CD8-positive, alpha-beta T cell (primary cell): ENCODE measurements at regions of chr1 and their contacts with region 1.

Region 1: DNA sequence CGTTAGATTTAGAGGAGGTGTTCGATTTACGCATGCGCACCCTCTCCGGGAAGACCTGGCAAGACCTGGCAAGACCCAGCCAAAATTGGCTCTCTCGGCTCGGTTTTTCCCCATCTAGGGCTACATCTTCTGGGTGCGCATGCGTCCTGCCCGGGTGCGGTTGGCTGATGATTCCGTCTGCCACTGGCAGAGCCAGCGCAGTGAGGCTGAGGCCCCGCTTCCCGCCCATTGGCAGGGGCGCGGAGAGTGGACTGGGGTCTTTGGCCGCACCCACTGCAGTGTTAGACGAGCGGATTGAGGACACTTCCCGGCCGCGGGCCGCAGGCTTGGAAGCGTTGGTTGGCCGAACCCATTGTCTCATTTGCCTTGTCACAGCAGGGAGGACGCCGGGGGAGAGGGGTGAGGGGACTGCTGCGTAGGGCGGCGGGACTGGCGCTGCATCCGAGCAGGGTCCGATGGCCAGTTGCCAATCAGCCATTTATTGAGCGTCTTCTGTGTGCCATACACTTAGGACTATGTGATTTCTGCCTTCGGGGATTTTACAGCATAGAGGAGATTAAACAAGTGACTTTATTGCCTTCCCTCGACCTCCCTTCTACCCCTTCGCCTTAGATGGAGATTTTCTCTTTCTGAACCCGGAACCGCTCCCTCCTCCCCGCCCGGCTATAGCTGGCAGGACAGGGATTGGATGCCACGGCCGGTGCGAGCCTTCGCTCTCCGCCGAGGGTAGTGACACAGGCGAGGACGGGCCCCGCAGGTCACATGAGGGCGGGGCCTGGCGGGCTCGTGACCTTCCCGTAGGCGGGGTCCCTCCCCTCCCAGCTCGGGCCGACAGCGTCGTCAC is 43.7 kb downstream of the MEF2D start:
- DNase-seq: peak; percentile 92 to 99 (median 96)
- ATAC-seq: peak; percentile 84
- H3K4me3 ChIP-seq: peak overlapping the region; percentile 57 to 62
- H3K4me3 Mint-ChIP-seq: peak overlapping the region; percentile 93
- H3K27ac ChIP-seq: peak overlapping the region; percentile 83 to 89
- H3K27ac Mint-ChIP-seq: peak overlapping the region; percentile 100
- H3K4me1 ChIP-seq: peaks cover 4% of the 10 kb centered on the region
- H3K4me1 Mint-ChIP-seq: peaks cover 17% of the 10 kb centered on the region
- H3K27me3 ChIP-seq: no peaks in the 10 kb centered on the region
- H3K27me3 Mint-ChIP-seq: no peaks in the 10 kb centered on the region
- CTCF ChIP-seq: no peak

Region 2: DNA sequence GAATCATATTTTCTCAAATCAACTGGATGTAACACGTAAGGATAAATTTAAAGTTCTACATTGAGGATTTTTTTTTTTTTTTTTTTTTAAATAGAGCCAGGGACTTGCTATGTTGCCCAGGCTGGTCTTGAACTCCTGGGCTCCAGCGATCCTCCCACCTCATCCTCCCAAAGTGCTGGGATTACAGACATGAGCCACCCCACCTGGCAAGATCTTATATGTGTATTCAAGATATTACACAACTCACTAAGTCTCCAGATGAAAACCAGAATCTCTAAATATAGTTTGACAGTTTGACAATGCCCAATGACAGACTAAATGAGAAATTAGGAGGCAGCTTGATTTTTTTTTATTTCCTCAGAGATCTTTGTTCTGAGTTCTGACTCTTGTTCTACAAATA is 775.1 kb before region 1 on chr1:
- CTCF ChIA-PET with region 1: no interaction called
- POLR2A ChIA-PET with region 1: no interaction called
- intact Hi-C with region 1: no loop called
- DNase-seq: no peak
- ATAC-seq: no peak
- H3K4me3 ChIP-seq: no peak overlapping the region
- H3K4me3 Mint-ChIP-seq: no peak overlapping the region
- H3K27ac ChIP-seq: no peak overlapping the region
- H3K27ac Mint-ChIP-seq: no peak overlapping the region
- H3K4me1 ChIP-seq: peaks cover 32% of the 10 kb centered on the region
- H3K4me1 Mint-ChIP-seq: peaks cover 53% of the 10 kb centered on the region
- H3K27me3 ChIP-seq: no peaks in the 10 kb centered on the region
- H3K27me3 Mint-ChIP-seq: no peaks in the 10 kb centered on the region
- CTCF ChIP-seq: no peak

Region 3: GRCh38 chr1:155847823-155848529 is 608.9 kb before region 1 on chr1:
- CTCF ChIA-PET with region 1: no interaction called
- POLR2A ChIA-PET with region 1: no interaction called
- intact Hi-C with region 1: no loop called
- DNase-seq: peak in 1 of 9 experiments; percentile 29
- ATAC-seq: no peak
- H3K4me3 ChIP-seq: no peak overlapping the region
- H3K4me3 Mint-ChIP-seq: peak overlapping the region; percentile 44
- H3K27ac ChIP-seq: peak overlapping the region in 1 of 2 experiments; percentile 12
- H3K27ac Mint-ChIP-seq: peak overlapping the region; percentile 25
- H3K4me1 ChIP-seq: peaks cover 26% of the 10 kb centered on the region
- H3K4me1 Mint-ChIP-seq: peaks cover 61% of the 10 kb centered on the region
- H3K27me3 ChIP-seq: no peaks in the 10 kb centered on the region
- H3K27me3 Mint-ChIP-seq: no peaks in the 10 kb centered on the region
- CTCF ChIP-seq: no peak

Region 4: GRCh38 chr1:156601122-156601830 is 144.4 kb after region 1 on chr1 and contains the start of gene GPATCH4:
- CTCF ChIA-PET with region 1: interaction called, 3 read pairs
- POLR2A ChIA-PET with region 1: interaction called, 5 read pairs
- intact Hi-C with region 1: loop called (anchors 2 kb)
- DNase-seq: peak in 8 of 9 experiments; percentile 61 to 86 (median 72)
- ATAC-seq: peak; percentile 80
- H3K4me3 ChIP-seq: peak within 1 kb of the TSS; percentile 65 to 70
- H3K4me3 Mint-ChIP-seq: peak within 1 kb of the TSS; percentile 98
- H3K27ac ChIP-seq: peak within 1 kb of the TSS; percentile 57 to 80
- H3K27ac Mint-ChIP-seq: peak within 1 kb of the TSS; percentile 98
- H3K4me1 ChIP-seq: peaks cover 24% of the 10 kb centered on the region
- H3K4me1 Mint-ChIP-seq: peaks cover 34% of the 10 kb centered on the region
- H3K27me3 ChIP-seq: no peaks in the 10 kb centered on the region
- H3K27me3 Mint-ChIP-seq: no peaks in the 10 kb centered on the region
- CTCF ChIP-seq: no peak
- total RNA-seq, gene GPATCH4: 46.4 to 46.7 TPM

Region 5: DNA sequence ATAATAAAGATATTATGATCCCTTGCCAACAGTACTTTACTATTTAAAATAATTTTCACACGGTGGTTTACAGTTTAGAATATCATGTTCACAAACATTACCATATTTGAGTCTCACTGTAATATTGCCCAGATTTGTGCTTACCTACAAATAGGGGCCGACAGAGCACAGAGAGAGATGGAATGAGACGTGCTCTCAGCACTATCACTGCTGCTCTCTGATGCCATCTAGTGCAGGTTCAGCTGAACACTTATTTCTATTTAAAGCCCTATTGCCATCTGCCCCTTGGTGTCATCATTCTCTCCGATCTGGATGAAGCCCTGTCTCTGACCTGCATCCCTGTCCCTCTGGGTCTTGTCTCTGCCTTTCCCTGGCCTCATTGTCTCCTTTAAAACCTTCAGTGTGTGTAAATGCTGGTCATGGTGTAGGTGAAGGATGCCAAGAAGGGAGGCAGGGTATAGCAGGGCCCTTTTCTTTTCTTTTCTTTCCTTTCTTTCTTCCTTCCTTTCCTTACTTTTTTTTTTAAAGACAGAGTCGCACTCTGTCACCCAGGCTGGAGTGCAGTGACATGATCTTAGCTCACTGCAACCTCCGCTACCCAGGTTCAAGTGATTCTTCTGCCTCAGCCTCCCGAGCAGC is 151.3 kb after region 1 on chr1:
- CTCF ChIA-PET with region 1: interaction called, 17 read pairs
- POLR2A ChIA-PET with region 1: interaction called, 5 read pairs
- intact Hi-C with region 1: loop called (anchors 1 kb)
- DNase-seq: peak; percentile 37 to 89 (median 65)
- ATAC-seq: peak; percentile 95
- H3K4me3 ChIP-seq: no peak overlapping the region
- H3K4me3 Mint-ChIP-seq: no peak overlapping the region
- H3K27ac ChIP-seq: no peak overlapping the region
- H3K27ac Mint-ChIP-seq: no peak overlapping the region
- H3K4me1 ChIP-seq: peaks cover 8% of the 10 kb centered on the region
- H3K4me1 Mint-ChIP-seq: peaks cover 11% of the 10 kb centered on the region
- H3K27me3 ChIP-seq: peaks cover 0 to 2% of the 10 kb centered on the region in 2 experiments
- H3K27me3 Mint-ChIP-seq: peaks cover 9% of the 10 kb centered on the region
- CTCF ChIP-seq: peak; percentile 88

Region 6: DNA sequence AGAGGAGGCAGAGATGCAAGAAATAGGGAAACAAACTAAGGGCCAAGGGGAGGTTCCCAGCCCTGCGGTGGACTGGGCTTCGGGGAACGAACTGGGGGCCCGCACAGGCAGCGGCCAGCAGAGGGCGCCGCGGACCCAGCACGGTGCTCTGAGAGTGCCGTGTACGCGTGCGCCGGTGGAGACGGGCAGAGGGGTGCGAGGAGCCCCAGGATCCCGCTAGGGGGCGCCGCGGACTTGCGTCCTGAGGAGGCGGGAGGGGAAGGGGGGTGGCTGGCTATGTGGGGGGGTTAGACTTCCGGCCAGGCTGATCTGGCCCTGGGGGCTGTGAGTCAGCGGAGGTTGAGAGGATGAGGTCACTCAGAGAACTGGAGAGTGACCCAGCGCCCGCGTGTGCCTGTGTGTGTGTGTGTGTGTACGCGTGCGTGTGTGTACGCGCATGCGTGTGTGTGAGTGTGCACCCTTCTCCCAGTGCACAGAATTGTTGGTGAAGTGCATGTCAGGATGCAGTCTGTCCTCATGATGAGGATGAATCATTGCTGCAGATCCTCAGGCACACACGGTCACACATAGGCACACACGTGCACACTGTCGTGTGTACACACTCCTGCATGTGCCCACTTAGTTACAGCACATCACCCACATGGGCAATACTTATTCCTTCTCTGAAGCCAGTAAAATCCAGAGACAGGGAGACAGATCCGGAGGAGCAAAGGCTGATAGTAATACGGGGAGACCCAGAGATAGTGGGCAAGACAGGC is 203.3 kb after region 1 on chr1:
- CTCF ChIA-PET with region 1: no interaction called
- POLR2A ChIA-PET with region 1: no interaction called
- intact Hi-C with region 1: loop called in 1 of 2 experiments (anchors 5 kb)
- DNase-seq: peak; percentile 74 to 94 (median 92)
- ATAC-seq: peak; percentile 91
- H3K4me3 ChIP-seq: no peak overlapping the region
- H3K4me3 Mint-ChIP-seq: peak overlapping the region; percentile 45
- H3K27ac ChIP-seq: peak overlapping the region in 1 of 2 experiments; percentile 47
- H3K27ac Mint-ChIP-seq: no peak overlapping the region
- H3K4me1 ChIP-seq: peaks cover 44% of the 10 kb centered on the region
- H3K4me1 Mint-ChIP-seq: peaks cover 44% of the 10 kb centered on the region
- H3K27me3 ChIP-seq: peaks cover 12 to 14% of the 10 kb centered on the region in 2 experiments
- H3K27me3 Mint-ChIP-seq: peaks cover 20% of the 10 kb centered on the region
- CTCF ChIP-seq: peak; percentile 95

Region 7: GRCh38 chr1:156740679-156741612 is 284.1 kb after region 1 on chr1 and contains the start of gene MRPL24:
- CTCF ChIA-PET with region 1: no interaction called
- POLR2A ChIA-PET with region 1: no interaction called
- intact Hi-C with region 1: loop called in 1 of 2 experiments (anchors 2 kb)
- DNase-seq: peak; percentile 88 to 100 (median 96)
- ATAC-seq: peak; percentile 88
- H3K4me3 ChIP-seq: peak within 1 kb of the TSS; percentile 60 to 68
- H3K4me3 Mint-ChIP-seq: peak within 1 kb of the TSS; percentile 97
- H3K27ac ChIP-seq: peak within 1 kb of the TSS; percentile 55 to 81
- H3K27ac Mint-ChIP-seq: peak within 1 kb of the TSS; percentile 98
- H3K4me1 ChIP-seq: peaks cover 13% of the 10 kb centered on the region
- H3K4me1 Mint-ChIP-seq: peaks cover 38% of the 10 kb centered on the region
- H3K27me3 ChIP-seq: no peaks in the 10 kb centered on the region
- H3K27me3 Mint-ChIP-seq: no peaks in the 10 kb centered on the region
- CTCF ChIP-seq: no peak
- total RNA-seq, gene MRPL24: 9.1 to 12.5 TPM